ENCODE measurements at regions of chr11 and their contacts with region 1.

Region 1: DNA sequence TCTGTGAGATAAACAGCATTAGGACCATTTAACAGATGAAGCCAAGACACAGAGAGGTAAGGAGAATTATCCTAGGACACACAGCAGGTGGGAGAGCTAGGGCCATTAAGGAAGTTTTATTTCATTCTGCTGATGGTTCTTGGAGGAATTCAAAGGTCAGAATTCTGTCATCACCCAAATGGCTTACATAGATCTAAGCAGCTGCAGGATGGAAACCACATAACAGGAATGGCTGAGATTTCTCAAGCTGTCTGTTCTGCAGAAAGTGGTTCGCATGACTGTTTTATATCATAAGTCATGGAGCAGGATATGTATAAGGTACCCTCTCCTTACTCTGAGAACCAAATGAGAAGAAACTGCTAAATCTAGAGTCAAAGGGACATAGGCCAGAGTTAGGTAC is 163.2 kb upstream of the NARS2 start:
- DNase-seq: no peak
- ATAC-seq: no peak
- H3K4me3 ChIP-seq: no peak overlapping the region
- H3K27ac ChIP-seq: no peak overlapping the region
- H3K4me1 ChIP-seq: peaks cover 0 to 15% (median 5%) of the 10 kb centered on the region in 9 donors
- H3K27me3 ChIP-seq: no peaks in the 10 kb centered on the region
- CTCF ChIP-seq: no peak

Region 2: DNA sequence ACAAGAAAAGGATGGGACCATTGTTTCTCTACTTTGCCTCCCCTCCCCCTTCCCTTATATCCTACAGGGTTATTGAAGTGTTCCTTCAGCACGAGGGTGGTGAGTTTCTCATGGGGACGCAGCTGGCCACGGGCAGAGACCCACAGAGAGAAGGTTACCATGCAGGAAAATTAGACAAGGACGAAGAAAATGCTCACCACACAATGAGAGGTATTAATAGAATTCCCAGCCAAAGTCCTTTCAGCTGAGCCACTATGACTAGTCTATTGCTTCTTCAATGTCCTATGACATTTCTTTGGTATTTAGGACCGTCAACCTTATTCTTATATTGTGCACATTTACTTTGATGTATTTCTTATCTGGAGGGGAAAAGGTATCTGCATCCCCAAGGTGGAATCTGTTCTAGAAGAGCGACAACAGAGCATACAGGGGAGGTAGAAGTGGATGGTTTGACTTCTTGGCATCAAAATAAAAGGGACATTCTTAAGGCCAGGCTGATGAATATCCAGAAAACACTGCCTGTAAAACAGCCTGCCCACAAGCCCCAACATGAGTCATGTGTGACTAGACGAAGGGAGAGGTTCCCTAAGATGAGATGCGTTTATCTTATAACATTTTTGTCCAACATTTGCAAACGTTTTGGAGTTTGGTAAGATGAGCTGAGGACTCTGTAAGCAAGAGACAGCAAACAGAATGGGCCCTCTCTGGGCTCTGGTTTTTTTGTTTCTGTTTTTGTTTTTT is 46.6 kb after region 1 on chr11:
- intact Hi-C with region 1: loop called in 1 of 10 experiments (anchors 5 kb)
- DNase-seq: no peak
- ATAC-seq: no peak
- H3K4me3 ChIP-seq: no peak overlapping the region
- H3K27ac ChIP-seq: no peak overlapping the region
- H3K4me1 ChIP-seq: peaks cover 0 to 4% (median 0%) of the 10 kb centered on the region in 9 donors
- H3K27me3 ChIP-seq: peaks cover 0 to 10% (median 0%) of the 10 kb centered on the region in 7 donors
- CTCF ChIP-seq: no peak

Region 3: GRCh38 chr11:79160791-79161403 is 423.0 kb after region 1 on chr11:
- intact Hi-C with region 1: no loop called
- DNase-seq: no peak
- ATAC-seq: no peak
- H3K4me3 ChIP-seq: no peak overlapping the region
- H3K27ac ChIP-seq: no peak overlapping the region
- H3K4me1 ChIP-seq: no peaks in the 10 kb centered on the region
- H3K27me3 ChIP-seq: no peaks in the 10 kb centered on the region
- CTCF ChIP-seq: peak in 4 of 9 donors; percentile 25 to 34 (median 26)

Measured in heart right ventricle (tissue), 16 donors.